Right cardiac atrium (tissue), 5 donors: ENCODE measurements at regions of chr3 and their contacts with region 1.

Region 1: GRCh38 chr3:162354356-162354755 is 857.7 kb downstream of the OTOL1 start:
- DNase-seq: no peak
- ATAC-seq: no peak
- H3K4me3 ChIP-seq: no peak overlapping the region
- H3K27ac ChIP-seq: no peak overlapping the region
- H3K4me1 ChIP-seq: no peaks in the 10 kb centered on the region
- H3K27me3 ChIP-seq: no peaks in the 10 kb centered on the region

Region 2: DNA sequence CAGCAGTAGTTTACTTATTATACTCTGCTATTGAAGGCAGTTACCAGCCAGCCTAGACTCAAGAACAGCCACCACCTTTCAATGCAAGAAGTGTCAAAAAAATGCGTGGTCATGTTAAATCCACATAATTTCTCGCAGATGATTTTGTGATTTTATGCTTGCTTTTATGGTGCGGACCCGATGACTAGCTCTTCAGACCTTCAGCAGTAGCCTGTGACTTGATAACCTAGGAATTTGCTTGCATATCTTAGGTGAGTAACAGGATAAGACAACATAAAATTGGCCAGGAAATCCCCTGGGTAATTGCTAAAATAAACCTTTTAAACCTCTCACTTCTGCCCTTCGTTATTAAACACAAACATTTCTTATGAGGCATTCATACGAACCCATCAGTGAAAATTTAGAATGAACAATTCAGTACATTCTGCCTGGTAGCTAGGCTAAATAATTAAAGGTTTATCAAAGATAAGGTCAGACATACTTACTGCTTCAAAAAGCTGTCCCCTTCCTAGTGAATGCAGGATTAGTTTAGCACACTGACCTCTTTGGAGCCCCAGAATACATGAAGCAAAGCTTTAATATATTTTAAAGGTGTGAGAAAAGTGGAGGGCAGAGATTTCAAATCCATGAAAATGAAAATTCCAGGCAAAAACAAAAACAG is 58.9 kb before region 1 on chr3:
- intact Hi-C with region 1: loop called in 1 of 4 experiments (anchors 10 kb)
- DNase-seq: no peak
- ATAC-seq: no peak
- H3K4me3 ChIP-seq: no peak overlapping the region
- H3K27ac ChIP-seq: no peak overlapping the region
- H3K4me1 ChIP-seq: no peaks in the 10 kb centered on the region
- H3K27me3 ChIP-seq: no peaks in the 10 kb centered on the region

Region 3: DNA sequence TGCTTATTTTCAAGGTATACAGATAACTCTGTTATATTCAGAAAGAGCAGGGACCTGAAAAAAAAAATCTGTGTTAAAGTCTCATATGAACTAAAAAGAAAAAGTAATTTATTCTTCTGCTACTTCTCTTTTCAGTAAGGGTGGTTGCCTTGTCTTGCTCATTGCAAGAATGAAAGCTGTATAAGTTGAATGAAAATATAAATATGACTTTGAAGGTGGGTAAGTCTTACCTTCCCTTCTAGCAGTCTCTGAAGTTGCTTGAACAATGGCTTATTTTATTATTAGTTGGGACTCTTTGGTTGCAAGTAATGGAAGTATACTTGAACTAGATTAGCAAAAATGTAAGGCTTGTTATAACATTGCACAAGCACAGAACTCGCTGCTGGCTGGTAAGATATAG is 1169.0 kb after region 1 on chr3:
- intact Hi-C with region 1: no loop called
- DNase-seq: no peak
- ATAC-seq: no peak
- H3K4me3 ChIP-seq: no peak overlapping the region
- H3K27ac ChIP-seq: no peak overlapping the region
- H3K4me1 ChIP-seq: no peaks in the 10 kb centered on the region
- H3K27me3 ChIP-seq: no peaks in the 10 kb centered on the region